ENCODE measurements at regions of chr16 and their contacts with region 1.

Region 1: GRCh38 chr16:86519649-86520316 is 9.5 kb downstream of the FOXF1 start:
- DNase-seq: peak; percentile 82
- H3K4me3 ChIP-seq: peak overlapping the region in 1 of 2 experiments; percentile 38; a peak in 2 of 4 replicates
- H3K27ac ChIP-seq: no peak overlapping the region
- H3K4me1 ChIP-seq: no peaks in the 10 kb centered on the region
- H3K27me3 ChIP-seq: peaks cover 82% of the 10 kb centered on the region
- CTCF ChIP-seq: peak; percentile 89
- EP300 ChIP-seq: no peak
- RAD21 ChIP-seq: peak; percentile 71

Region 2: DNA sequence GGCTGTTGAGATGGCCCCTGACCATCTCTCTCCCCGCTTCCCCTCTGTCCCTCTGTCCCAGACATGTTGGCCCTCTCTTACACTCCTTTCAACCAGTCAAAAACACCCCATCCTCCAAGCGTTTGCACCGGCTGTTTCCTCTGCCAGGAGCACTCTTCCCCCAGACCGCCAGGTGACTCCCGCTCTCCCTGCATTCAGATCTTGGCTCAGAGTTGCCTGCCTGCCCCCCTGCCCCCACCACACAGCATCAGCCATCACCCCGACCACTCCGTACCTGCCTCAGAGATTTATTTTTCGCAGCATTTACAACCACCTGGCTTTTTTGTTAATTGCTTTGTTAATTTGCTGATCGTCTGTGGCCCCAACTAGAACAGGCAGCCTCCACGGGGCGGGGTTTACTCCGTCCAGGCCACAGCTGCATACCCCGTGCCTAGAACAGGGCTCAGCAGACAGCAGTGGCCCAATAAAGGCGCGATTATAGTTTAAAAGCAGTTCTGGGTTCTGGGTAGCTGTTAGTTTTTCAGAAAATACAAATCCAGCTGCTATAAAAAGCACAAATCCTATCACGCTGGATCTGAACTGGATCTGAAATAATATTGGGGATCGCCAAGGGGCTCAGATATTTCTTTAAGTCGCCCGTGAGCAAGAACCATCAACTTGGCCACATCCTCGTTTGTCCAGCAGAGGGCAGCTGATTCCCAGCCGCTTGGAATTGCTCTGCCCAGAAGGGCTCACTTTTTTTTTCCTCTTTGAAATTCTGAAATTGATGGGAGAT is 447.3 kb before region 1 on chr16:
- CTCF ChIA-PET with region 1: interaction called, 178 read pairs
- POLR2A ChIA-PET with region 1: no interaction called
- DNase-seq: peak; percentile 72
- H3K4me3 ChIP-seq: peak overlapping the region in 1 of 2 experiments; percentile 9; a peak in 1 of 4 replicates
- H3K27ac ChIP-seq: no peak overlapping the region
- H3K4me1 ChIP-seq: no peaks in the 10 kb centered on the region
- H3K27me3 ChIP-seq: peaks cover 60% of the 10 kb centered on the region
- CTCF ChIP-seq: peak; percentile 83
- EP300 ChIP-seq: no peak
- RAD21 ChIP-seq: peak; percentile 74

Region 3: DNA sequence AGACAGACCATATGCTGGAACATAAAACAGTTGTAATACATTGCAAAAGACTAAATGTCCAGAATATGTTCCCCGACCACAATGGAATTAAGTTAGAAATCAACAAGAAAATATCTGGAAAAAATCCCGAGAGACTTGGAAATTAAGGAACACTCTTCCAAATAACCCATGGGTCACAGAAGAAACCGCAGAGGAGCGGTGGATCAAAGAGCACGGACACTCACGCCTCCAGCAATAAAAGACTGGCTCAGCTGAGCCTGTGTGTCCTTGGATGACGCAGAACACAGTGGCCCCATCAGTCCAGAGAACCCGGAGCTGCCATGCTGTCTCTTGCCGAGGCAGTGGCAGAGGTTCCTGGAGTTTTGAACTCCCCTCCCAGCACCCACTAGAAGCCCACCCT is 40.4 kb before region 1 on chr16:
- CTCF ChIA-PET with region 1: interaction called, 11 read pairs
- POLR2A ChIA-PET with region 1: no interaction called
- DNase-seq: no peak
- H3K4me3 ChIP-seq: no peak overlapping the region
- H3K27ac ChIP-seq: no peak overlapping the region
- H3K4me1 ChIP-seq: no peaks in the 10 kb centered on the region; a peak in 1 of 4 replicates
- H3K27me3 ChIP-seq: peaks cover 62% of the 10 kb centered on the region
- CTCF ChIP-seq: no peak
- EP300 ChIP-seq: no peak
- RAD21 ChIP-seq: no peak

Region 4: DNA sequence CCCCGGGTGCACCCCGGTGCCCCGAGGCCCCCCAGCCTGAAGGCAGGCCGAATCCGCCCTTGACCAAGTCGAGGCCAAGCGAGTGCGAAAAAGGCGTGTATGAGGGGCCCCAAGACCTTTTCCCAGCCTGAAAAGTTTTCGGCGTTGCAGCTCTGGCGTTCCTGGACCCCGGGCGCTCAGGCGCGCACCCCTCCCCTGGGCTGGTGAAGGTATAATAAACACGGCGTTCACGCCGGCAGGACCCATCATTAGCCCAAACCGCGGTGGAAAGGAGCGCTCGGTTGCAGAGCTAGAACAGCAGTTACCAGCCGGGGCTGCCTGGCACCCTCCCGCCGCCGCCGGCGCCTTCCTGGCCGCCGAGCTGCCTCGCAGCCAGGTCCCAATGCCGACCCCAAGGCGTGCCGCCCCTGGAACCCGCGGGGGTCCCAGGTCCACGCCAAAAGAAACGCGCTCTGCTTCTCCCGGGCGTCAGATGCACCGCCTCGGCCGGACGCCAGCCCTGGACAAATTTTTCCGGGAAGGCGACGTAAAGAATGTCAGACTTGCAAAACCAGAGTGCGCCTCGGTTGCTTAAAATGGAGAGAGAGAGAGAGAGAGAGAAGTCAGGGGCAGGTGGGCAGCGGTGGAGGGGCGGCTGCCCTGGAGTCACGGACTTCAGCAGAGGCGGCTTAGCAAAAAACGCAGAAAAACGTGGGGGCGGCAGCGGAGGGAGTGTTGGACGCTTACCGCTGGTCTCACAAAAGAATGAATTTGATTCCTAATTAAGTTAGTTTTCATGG is 20.9 kb before region 1 on chr16:
- CTCF ChIA-PET with region 1: interaction called, 24 read pairs
- POLR2A ChIA-PET with region 1: no interaction called
- DNase-seq: no peak
- H3K4me3 ChIP-seq: no peak overlapping the region
- H3K27ac ChIP-seq: no peak overlapping the region
- H3K4me1 ChIP-seq: no peaks in the 10 kb centered on the region
- H3K27me3 ChIP-seq: peaks cover 97% of the 10 kb centered on the region
- CTCF ChIP-seq: no peak
- EP300 ChIP-seq: no peak
- RAD21 ChIP-seq: no peak

Region 5: DNA sequence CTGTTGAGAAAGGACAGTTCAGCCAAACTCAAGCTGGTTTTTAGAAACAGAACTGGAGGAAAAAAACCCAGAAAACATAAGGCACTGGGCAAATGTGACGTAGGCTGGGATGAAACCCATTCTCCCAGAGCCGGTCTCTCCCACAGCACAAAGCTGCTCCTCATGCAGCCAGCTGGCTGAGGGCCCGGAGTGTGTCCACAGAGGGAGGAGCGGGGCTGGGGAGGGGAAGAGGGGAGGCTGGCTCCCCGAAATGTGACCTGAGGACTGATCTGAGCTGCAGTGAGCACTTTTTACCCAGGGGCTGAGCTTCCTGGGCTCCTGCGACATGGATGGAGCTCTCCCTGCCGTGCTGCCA is 11.4 kb after region 1 on chr16:
- CTCF ChIA-PET with region 1: interaction called, 48 read pairs
- POLR2A ChIA-PET with region 1: no interaction called
- DNase-seq: no peak
- H3K4me3 ChIP-seq: no peak overlapping the region
- H3K27ac ChIP-seq: no peak overlapping the region
- H3K4me1 ChIP-seq: no peaks in the 10 kb centered on the region
- H3K27me3 ChIP-seq: no peaks in the 10 kb centered on the region; the same call in 1 of the 2 replicates
- CTCF ChIP-seq: no peak
- EP300 ChIP-seq: no peak
- RAD21 ChIP-seq: no peak

Measured in SK-N-SH (cell line).